CD4-positive, alpha-beta T cell (primary cell): ENCODE measurements at regions of chr1 and their contacts with region 1.

Region 1: DNA sequence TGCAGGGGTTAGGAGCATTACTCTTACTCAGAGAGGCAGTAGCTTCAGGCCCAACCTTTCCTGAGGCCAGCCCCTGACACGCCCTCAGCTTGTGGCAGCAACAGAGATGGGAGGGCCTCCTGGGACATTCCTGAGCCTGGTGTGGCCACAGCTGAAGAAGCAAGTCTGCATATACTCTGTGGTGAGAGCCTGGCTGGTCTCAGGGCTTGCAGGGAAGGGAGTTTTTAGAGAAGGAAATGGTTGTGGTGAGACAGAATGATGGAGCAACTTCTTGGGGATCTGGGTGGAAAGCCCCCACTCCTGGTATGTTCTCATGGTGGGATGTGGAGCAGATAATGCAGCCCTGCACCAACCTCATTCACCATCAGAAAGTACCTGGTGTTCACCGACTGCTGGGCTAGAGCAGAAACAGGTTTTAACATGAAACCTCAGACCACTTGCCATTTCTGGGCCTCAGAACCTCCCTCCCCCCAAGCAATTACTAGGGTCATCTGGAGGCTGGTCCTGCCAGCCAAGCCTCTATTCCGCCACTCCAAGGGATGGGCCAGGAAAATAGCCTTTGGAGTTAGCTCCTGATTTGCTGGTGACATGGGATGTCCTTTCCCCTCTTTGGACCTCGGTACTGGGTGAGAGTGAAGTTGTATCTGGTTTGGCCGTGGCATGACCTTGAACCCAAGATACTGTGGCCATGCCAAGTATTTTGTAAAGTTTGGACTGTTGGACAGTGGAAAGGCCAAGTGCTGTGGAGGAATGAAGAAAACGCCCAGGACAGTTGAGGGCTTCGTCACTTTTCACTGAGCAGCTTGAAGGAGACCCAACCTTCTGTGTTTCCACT is 28.1 kb upstream of the RNF19B start:
- DNase-seq: peak in 7 of 14 experiments; percentile 20 to 91 (median 36)
- ATAC-seq: peak; percentile 83
- H3K4me3 ChIP-seq: no peak overlapping the region
- H3K4me3 Mint-ChIP-seq: no peak overlapping the region
- H3K27ac ChIP-seq: peak overlapping the region in 1 of 2 donors; percentile 70
- H3K27ac Mint-ChIP-seq: peak overlapping the region; percentile 59
- H3K4me1 ChIP-seq: peaks cover 45% of the 10 kb centered on the region
- H3K4me1 Mint-ChIP-seq: peaks cover 28% of the 10 kb centered on the region
- H3K27me3 ChIP-seq: no peaks in the 10 kb centered on the region
- H3K27me3 Mint-ChIP-seq: no peaks in the 10 kb centered on the region
- CTCF ChIP-seq: no peak

Region 2: DNA sequence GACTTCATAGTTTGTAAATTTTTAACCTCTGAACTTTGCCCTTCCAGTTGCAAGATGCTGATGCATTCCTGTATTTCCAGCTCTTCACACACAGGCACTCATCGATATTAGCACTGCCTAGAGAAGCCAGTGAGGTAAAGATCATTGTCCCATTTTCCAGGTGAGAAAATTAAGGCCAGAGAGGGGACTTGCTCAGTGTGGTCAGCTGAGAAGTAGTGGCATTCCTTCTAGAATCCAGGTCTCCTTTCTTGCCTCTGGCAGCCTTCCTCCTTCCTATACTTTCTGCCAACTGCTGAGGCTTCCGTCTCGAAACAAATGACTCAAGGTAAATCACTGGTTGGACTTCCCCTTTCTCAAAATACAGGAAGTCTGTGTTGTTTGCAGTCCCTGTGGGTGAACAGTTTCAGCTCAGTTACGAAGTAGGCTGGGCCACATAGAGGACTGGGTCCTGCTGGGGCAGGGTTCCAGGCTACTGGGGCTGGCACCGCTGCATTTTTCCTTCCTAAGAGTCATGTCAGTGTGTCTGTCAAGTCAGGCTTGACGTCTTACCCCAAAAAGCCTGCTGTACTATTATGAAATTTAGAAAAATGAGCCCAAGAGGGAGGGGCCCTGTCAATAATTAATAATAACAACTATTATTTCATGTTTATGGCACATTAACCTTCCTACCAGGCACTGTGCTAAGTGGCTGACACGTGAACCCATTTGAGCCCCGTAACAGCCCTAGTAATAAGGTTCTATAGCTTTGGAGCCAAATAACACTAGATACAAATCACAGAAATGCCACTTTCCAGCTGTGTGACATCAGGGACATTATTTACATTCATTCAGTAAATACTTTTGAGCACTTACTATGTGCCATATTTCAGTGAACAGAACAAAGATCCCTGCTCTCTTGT is 11.5 kb before region 1 on chr1:
- CTCF ChIA-PET with region 1: interaction called, 3 read pairs
- POLR2A ChIA-PET with region 1: interaction called, 10 read pairs
- intact Hi-C with region 1: no loop called
- DNase-seq: peak; percentile 36 to 91 (median 56)
- ATAC-seq: peak; percentile 91
- H3K4me3 ChIP-seq: peak overlapping the region; percentile 45
- H3K4me3 Mint-ChIP-seq: peak overlapping the region; percentile 23
- H3K27ac ChIP-seq: peak overlapping the region; percentile 85 to 87
- H3K27ac Mint-ChIP-seq: peak overlapping the region; percentile 91
- H3K4me1 ChIP-seq: peaks cover 59% of the 10 kb centered on the region
- H3K4me1 Mint-ChIP-seq: peaks cover 44% of the 10 kb centered on the region
- H3K27me3 ChIP-seq: no peaks in the 10 kb centered on the region
- H3K27me3 Mint-ChIP-seq: no peaks in the 10 kb centered on the region
- CTCF ChIP-seq: no peak

Region 3: DNA sequence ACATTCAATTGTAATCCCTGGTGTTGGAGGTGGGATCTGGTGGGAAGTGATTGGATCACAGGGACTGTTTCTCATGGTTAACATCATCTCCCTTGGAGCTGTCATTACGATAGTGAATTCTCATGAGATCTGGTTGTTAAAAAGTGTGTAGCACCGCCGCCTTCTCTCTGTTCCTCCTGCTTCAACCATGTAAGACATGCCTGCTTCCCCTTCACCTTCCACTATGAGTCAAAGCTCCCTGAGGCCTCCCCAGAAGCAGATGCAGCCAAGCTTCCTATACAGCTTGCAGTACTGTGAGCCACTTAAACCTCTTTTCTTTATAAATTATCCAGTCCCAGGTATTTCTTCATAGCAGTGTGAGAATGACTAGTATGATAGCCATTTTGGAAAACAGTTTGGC is 219.3 kb after region 1 on chr1:
- CTCF ChIA-PET with region 1: no interaction called
- POLR2A ChIA-PET with region 1: no interaction called
- intact Hi-C with region 1: no loop called
- DNase-seq: no peak
- ATAC-seq: no peak
- H3K4me3 ChIP-seq: no peak overlapping the region
- H3K4me3 Mint-ChIP-seq: no peak overlapping the region
- H3K27ac ChIP-seq: no peak overlapping the region
- H3K27ac Mint-ChIP-seq: no peak overlapping the region
- H3K4me1 ChIP-seq: no peaks in the 10 kb centered on the region
- H3K4me1 Mint-ChIP-seq: no peaks in the 10 kb centered on the region
- H3K27me3 ChIP-seq: no peaks in the 10 kb centered on the region
- H3K27me3 Mint-ChIP-seq: peaks cover 42% of the 10 kb centered on the region
- CTCF ChIP-seq: no peak